T-cell (primary cell): ENCODE measurements at regions of chr20 and their contacts with region 1.

Region 1: GRCh38 chr20:49219089-49219923 is at the start of gene DDX27:
- DNase-seq: peak; percentile 91 to 100 (median 95)
- ATAC-seq: peak; percentile 88 to 92 (median 90)
- H3K4me3 ChIP-seq: peak within 1 kb of the TSS; percentile 93 to 95
- H3K4me3 Mint-ChIP-seq: peak within 1 kb of the TSS; percentile 88 to 97 (median 94)
- H3K27ac ChIP-seq: peak within 1 kb of the TSS; percentile 96
- H3K27ac Mint-ChIP-seq: peak within 1 kb of the TSS; percentile 91 to 93
- H3K4me1 ChIP-seq: peaks cover 3 to 32% of the 10 kb centered on the region in 2 experiments
- H3K4me1 Mint-ChIP-seq: peaks cover 27 to 33% (median 32%) of the 10 kb centered on the region in 3 donors
- H3K27me3 ChIP-seq: no peaks in the 10 kb centered on the region
- H3K27me3 Mint-ChIP-seq: no peaks in the 10 kb centered on the region
- total RNA-seq, gene DDX27: 57.7 to 92.3 (median 59.2) TPM

Region 2: DNA sequence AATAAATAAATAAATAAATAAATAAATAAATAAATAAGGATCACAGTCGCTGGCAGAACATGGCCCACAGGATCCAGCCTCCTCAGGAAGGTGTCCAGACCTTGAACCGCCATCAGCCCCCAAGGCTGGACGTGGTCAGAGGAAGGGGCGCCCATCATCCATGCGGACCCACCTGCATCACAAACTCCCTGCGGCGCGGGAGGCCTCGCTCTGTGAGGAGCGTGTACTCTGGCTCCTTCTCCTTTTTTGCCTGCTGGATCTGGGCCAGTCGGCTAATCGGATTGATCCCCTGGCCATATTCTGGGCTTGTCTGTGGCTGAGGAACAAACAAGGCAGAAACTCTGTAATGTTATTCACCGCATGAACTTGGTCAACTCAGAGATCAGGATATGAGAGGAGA is 96.4 kb before region 1 on chr20:
- CTCF ChIA-PET with region 1: interaction called, 7 to 11 read pairs
- POLR2A ChIA-PET with region 1: interaction called in 1 of 2 experiments, 8 read pairs
- DNase-seq: no peak
- ATAC-seq: no peak
- H3K4me3 ChIP-seq: no peak overlapping the region
- H3K4me3 Mint-ChIP-seq: no peak overlapping the region
- H3K27ac ChIP-seq: no peak overlapping the region
- H3K27ac Mint-ChIP-seq: no peak overlapping the region
- H3K4me1 ChIP-seq: no peaks in the 10 kb centered on the region
- H3K4me1 Mint-ChIP-seq: peaks cover 0 to 8% (median 4%) of the 10 kb centered on the region in 3 donors
- H3K27me3 ChIP-seq: no peaks in the 10 kb centered on the region
- H3K27me3 Mint-ChIP-seq: no peaks in the 10 kb centered on the region

Region 3: GRCh38 chr20:49132995-49133478 is 86.3 kb before region 1 on chr20:
- CTCF ChIA-PET with region 1: interaction called, 10 to 70 read pairs
- POLR2A ChIA-PET with region 1: no interaction called
- DNase-seq: peak in 8 of 35 experiments; percentile 3 to 75 (median 14)
- ATAC-seq: peak; percentile 48 to 71 (median 61)
- H3K4me3 ChIP-seq: no peak overlapping the region
- H3K4me3 Mint-ChIP-seq: no peak overlapping the region
- H3K27ac ChIP-seq: no peak overlapping the region
- H3K27ac Mint-ChIP-seq: peak overlapping the region; percentile 4 to 12
- H3K4me1 ChIP-seq: peaks cover 0 to 4% of the 10 kb centered on the region in 2 experiments
- H3K4me1 Mint-ChIP-seq: peaks cover 7 to 12% (median 12%) of the 10 kb centered on the region in 3 donors
- H3K27me3 ChIP-seq: no peaks in the 10 kb centered on the region
- H3K27me3 Mint-ChIP-seq: no peaks in the 10 kb centered on the region

Region 4: DNA sequence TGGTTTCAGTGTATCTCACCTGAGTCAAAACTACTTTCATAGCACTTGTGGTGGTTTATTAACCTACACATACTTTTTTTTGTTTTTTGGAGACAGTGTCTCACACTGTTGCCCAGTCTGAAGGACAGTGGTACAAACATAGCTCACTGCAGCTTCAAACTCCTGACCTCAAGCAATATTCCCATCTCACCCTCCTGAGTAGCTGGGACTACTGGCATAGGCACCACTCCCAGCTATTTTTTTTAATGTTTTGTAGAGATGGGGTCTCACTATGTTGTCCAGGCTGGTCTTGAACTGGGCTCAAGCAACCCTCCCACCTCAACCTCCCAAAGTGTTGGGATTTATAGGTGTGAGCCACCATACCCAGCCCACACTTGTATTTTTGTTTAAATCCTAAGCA is 80.9 kb before region 1 on chr20:
- CTCF ChIA-PET with region 1: interaction called, 10 to 70 read pairs
- POLR2A ChIA-PET with region 1: no interaction called
- DNase-seq: no peak
- ATAC-seq: no peak
- H3K4me3 ChIP-seq: no peak overlapping the region
- H3K4me3 Mint-ChIP-seq: no peak overlapping the region
- H3K27ac ChIP-seq: no peak overlapping the region
- H3K27ac Mint-ChIP-seq: peak overlapping the region in 1 of 2 donors; percentile 43
- H3K4me1 ChIP-seq: peaks cover 0 to under 1% of the 10 kb centered on the region in 2 experiments
- H3K4me1 Mint-ChIP-seq: peaks cover 11 to 15% (median 13%) of the 10 kb centered on the region in 3 donors
- H3K27me3 ChIP-seq: no peaks in the 10 kb centered on the region
- H3K27me3 Mint-ChIP-seq: no peaks in the 10 kb centered on the region

Region 5: DNA sequence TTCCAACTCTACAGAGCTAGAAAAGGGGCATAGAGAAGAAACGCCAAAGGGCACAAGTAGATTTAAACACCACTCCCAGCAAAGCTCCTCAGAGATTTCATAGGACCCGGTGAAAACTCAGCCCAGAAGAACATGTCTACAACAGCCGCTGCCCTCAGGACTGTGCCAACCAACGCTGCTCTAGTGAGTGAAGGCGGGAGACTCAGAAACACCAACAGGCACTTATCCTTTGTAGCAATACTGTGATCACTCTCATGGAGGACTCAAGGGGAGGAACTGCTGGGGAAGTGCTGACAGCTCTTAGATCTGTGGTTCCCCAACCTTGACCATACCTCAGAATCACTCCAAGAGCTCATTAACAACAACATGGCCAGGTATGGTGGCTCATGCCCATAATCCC is 70.7 kb before region 1 on chr20:
- CTCF ChIA-PET with region 1: interaction called in 1 of 2 experiments, 7 read pairs
- POLR2A ChIA-PET with region 1: interaction called in 1 of 2 experiments, 12 read pairs
- DNase-seq: no peak
- ATAC-seq: no peak
- H3K4me3 ChIP-seq: no peak overlapping the region
- H3K4me3 Mint-ChIP-seq: no peak overlapping the region
- H3K27ac ChIP-seq: no peak overlapping the region
- H3K27ac Mint-ChIP-seq: no peak overlapping the region
- H3K4me1 ChIP-seq: no peaks in the 10 kb centered on the region
- H3K4me1 Mint-ChIP-seq: peaks cover 21 to 23% (median 22%) of the 10 kb centered on the region in 3 donors
- H3K27me3 ChIP-seq: no peaks in the 10 kb centered on the region
- H3K27me3 Mint-ChIP-seq: no peaks in the 10 kb centered on the region

Region 6: DNA sequence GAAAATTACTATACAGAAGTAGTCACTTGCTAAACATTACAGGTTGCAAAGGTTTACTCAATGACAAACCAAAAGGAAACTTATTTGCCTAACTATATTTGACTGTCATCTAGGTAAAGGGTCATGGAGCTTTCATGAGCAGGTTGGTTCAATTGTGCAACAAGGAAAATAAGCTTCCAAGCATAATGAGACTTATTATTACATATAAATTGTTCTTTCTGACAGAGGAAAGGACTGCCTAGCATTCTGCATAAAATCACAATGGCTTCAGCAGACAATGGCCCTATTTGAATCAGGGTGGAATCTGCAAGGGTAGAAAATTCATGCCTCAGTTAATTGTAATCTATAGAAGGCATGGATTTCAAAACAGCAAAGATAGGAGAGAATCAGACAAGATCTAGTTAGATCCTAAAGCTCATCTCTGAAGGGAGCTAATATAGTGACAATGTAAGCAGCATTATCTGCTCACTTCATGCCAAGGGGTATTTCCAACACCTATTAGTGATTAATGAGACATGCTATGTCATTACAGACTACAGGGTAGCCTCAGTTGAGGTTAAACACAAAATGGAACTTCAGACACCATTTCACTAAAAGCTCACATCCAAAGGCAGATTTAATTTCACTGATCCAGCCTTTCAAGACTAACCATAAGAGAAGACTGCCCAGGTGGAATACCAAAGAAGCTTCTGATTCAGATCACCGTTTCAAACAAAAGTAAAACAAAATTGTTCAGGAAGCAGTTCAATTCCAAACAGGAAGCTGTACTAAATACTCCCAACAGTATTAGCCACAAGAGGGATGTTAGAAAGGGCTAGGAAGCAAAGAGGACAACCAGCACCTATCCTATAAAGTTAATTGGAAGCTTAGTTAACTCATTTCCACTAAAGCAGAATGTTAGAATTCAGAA is 39.7 kb before region 1 on chr20:
- CTCF ChIA-PET with region 1: interaction called, 8 to 11 read pairs
- POLR2A ChIA-PET with region 1: interaction called, 5 to 8 read pairs
- DNase-seq: no peak
- ATAC-seq: peak in 1 of 4 experiments; percentile 46
- H3K4me3 ChIP-seq: no peak overlapping the region
- H3K4me3 Mint-ChIP-seq: no peak overlapping the region
- H3K27ac ChIP-seq: no peak overlapping the region
- H3K27ac Mint-ChIP-seq: peak overlapping the region in 1 of 2 donors; percentile 25
- H3K4me1 ChIP-seq: peaks cover 18 to 19% of the 10 kb centered on the region in 2 experiments
- H3K4me1 Mint-ChIP-seq: peaks cover 63 to 67% (median 66%) of the 10 kb centered on the region in 3 donors
- H3K27me3 ChIP-seq: no peaks in the 10 kb centered on the region
- H3K27me3 Mint-ChIP-seq: no peaks in the 10 kb centered on the region

Region 7: GRCh38 chr20:49186535-49187329 is 32.6 kb before region 1 on chr20:
- CTCF ChIA-PET with region 1: interaction called, 11 to 14 read pairs
- POLR2A ChIA-PET with region 1: interaction called, 4 to 8 read pairs
- DNase-seq: peak; percentile 33 to 79 (median 61)
- ATAC-seq: peak; percentile 18 to 45 (median 31)
- H3K4me3 ChIP-seq: peak overlapping the region; percentile 44 to 67
- H3K4me3 Mint-ChIP-seq: peak overlapping the region; percentile 83 to 87 (median 87)
- H3K27ac ChIP-seq: peak overlapping the region; percentile 61
- H3K27ac Mint-ChIP-seq: peak overlapping the region; percentile 82 to 86
- H3K4me1 ChIP-seq: peaks cover 18 to 21% of the 10 kb centered on the region in 2 experiments
- H3K4me1 Mint-ChIP-seq: peaks cover 55 to 59% (median 55%) of the 10 kb centered on the region in 3 donors
- H3K27me3 ChIP-seq: peaks cover 0 to 4% of the 10 kb centered on the region in 2 experiments
- H3K27me3 Mint-ChIP-seq: no peaks in the 10 kb centered on the region